ACHN (cell line): ENCODE measurements at regions of chr2 and their contacts with region 1.

Region 1: GRCh38 chr2:64311948-64312621 is 141.9 kb upstream of the LGALSL start:
- DNase-seq: no peak

Region 2: DNA sequence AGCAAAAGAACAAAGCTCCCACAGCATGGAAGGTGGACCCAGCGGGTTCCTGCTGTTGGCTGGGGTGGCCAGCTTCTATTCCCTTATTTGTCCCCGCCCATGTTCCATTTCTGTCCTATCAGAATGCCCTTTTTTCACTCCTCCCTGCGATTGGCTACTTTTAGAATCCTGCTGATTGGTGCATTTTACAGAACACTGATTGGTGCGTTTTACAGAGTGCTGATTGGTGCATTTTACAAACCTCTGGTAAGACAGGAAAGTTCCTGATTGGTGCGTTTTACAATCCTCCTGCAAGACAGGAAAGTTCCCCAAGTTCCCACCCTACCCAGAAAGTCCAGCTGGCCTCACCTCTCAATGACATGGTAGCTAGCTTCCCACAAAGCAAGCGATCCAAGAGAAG is 510.6 kb before region 1 on chr2:
- in situ Hi-C with region 1: no loop called
- DNase-seq: no peak

Region 3: DNA sequence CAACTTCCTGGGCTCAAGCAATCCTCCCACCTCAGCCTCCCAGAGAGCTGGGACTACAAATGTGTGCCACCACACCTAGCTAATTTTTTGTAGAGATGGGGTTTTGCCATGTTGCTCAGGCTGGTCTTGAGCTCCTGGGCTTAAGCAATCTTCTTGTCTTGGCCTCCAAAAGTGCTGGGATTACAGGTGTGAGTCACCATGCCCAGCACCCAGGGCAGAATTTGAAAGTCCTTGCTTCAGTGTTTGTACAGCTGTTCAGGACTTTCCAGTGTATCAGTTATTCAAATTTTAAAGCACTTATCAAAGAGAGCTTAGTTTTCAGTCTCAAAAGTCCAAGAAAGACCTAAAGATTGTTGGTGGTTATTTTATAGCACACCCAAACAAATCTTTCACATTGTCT is 249.3 kb before region 1 on chr2:
- in situ Hi-C with region 1: loop called (anchors 25 kb)
- DNase-seq: no peak

Region 4: DNA sequence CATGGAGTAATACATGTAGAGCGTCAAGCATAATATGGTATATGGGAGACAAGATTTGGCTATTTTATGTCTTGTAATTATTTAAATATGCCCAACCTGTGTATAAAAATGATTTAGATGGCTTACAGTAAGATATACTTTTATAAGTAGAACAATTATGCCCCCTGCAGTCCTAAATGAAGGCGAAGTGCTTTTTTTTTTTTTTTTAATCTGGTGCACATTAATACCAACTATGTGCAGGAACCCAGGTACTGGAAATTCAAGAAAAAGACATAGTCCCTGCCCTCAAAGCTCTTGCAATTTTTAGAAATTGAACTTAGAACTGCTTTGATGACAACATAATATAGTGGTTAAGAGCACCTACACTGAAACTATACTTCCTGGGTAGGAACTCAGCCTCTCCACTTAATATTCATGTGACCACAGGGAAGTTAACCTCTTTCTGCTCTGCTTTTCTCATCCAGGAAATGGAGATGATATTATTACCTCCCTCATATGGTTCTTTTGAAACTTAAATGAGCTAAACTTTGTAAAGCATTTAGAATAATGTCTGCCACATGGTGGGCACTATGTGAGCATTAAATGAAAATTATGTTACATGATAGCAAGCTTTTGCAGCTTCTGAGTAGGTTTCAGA is 250.2 kb after region 1 on chr2:
- in situ Hi-C with region 1: no loop called
- DNase-seq: peak; percentile 63

Region 5: GRCh38 chr2:64730551-64731262 is 418.6 kb after region 1 on chr2:
- in situ Hi-C with region 1: no loop called
- DNase-seq: peak; percentile 66